Pancreas (tissue), 10 donors: ENCODE measurements at regions of chr22 and their contacts with region 1.

Region 1: GRCh38 chr22:27405672-27406388 is 395.7 kb downstream of the MN1 start:
- DNase-seq: peak; percentile 36 to 90 (median 78)
- ATAC-seq: peak; percentile 92 to 99 (median 96)
- H3K4me3 ChIP-seq: no peak overlapping the region
- H3K27ac ChIP-seq: no peak overlapping the region
- H3K4me1 ChIP-seq: no peaks in the 10 kb centered on the region
- H3K27me3 ChIP-seq: no peaks in the 10 kb centered on the region
- CTCF ChIP-seq: peak; percentile 57 to 84 (median 70)

Region 2: GRCh38 chr22:27331526-27332281 is 74.1 kb before region 1 on chr22:
- intact Hi-C with region 1: no loop called
- DNase-seq: peak; percentile 51 to 89 (median 78)
- ATAC-seq: peak; percentile 92 to 97 (median 96)
- H3K4me3 ChIP-seq: no peak overlapping the region
- H3K27ac ChIP-seq: no peak overlapping the region
- H3K4me1 ChIP-seq: no peaks in the 10 kb centered on the region
- H3K27me3 ChIP-seq: no peaks in the 10 kb centered on the region
- CTCF ChIP-seq: peak; percentile 15 to 46 (median 28)

Region 3: DNA sequence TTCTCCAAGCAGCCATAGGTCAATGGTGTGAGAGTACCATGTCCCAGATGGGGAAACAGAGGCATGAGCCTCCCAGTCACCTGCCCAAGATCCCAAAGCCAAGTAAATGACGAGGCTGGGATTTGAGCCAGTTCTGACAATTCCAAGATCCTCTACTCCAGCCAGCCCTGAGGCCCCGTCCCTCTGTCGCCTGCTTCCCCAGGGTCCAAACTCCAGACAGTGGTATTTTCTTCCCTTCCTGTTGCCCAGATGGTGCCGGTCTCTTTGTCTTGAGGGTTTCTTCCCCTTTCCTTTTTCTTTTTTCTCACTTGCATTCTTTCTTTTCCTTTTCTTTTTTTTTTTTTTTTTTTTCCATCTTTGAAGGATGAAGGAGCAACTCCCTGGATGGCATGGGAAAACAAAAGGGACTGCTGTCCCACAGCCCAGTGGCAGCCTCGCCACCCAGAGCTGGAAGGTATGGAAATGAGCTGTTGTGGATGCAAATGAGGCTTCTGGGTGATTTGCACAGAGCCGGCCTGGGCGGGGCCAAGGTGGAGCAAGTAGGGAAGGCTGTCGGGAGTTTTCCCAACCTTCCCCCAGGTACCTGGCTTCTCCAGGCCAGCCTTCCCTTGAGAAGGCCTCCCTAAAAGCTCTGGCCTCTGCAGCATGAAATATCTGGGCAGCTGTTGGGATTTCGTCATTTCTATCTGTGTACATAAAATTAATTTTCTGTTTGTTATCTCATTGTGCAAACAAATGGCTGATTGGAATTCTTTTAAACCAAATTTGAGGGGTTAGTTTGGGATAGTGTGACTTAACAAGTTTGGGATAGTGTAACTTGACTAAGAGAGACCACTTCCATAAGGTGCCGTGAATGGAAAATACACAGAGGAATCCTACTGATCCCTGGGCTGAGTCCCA is 249.0 kb after region 1 on chr22:
- intact Hi-C with region 1: no loop called
- DNase-seq: peak in 1 of 6 donors; percentile 34
- ATAC-seq: peak; percentile 53 to 88 (median 69)
- H3K4me3 ChIP-seq: no peak overlapping the region
- H3K27ac ChIP-seq: no peak overlapping the region
- H3K4me1 ChIP-seq: no peaks in the 10 kb centered on the region
- H3K27me3 ChIP-seq: no peaks in the 10 kb centered on the region
- CTCF ChIP-seq: no peak

Region 4: DNA sequence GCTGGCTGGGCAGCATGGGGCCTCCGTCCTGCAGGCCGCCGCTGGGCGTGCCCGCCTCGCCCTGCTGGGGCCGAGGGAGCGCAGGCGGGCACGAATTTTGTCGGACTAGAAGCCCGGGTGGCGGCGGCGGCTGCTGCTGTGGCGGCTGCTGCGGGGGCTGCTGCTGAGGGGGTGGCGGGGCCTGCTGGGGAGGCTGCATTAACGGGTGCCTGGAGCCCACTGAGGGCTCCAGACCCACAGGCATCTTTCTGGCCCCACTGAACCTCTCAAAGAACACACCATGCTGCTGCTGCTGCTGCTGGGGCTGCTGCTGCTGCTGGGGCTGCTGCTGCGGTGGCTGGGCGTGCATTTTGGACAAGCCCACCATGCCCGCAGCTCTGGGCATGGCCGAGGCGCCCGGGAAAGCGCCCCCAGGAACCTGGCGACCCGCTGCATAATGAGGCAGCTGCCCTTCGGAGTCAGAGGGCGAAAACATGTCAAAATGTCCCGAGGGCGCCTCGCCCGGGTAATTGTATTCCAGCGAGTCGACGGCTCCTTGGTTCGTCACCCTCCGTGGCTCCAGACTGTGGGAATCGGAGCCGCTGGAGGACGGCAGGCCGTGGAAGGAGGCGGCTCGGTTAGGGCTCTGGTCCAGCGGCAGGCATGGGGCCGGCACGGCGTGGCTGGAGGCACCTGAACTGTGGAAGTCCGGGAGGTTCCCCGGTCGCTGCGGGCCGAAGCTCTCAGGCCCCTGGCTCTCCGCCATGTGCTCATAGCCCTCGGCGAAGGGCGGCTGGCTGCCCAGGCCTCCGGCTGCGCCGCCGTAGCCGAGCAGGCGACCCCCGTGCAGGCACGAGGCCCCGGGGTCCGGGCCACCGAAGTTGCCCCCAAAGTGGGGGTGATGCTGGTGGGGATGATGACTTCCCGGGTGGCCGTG is 393.8 kb after region 1 on chr22:
- intact Hi-C with region 1: loop called in 2 of 3 experiments (anchors 10 kb)
- DNase-seq: peak in 2 of 6 donors; percentile 65 to 77
- ATAC-seq: no peak
- H3K4me3 ChIP-seq: peak overlapping the region; percentile 57 to 83 (median 66)
- H3K27ac ChIP-seq: no peak overlapping the region
- H3K4me1 ChIP-seq: peaks cover 0 to 10% (median 0%) of the 10 kb centered on the region in 3 donors
- H3K27me3 ChIP-seq: no peaks in the 10 kb centered on the region
- CTCF ChIP-seq: no peak